Aorta (tissue), 5 donors: ENCODE measurements at regions of chr3 and their contacts with region 1.

Region 1: DNA sequence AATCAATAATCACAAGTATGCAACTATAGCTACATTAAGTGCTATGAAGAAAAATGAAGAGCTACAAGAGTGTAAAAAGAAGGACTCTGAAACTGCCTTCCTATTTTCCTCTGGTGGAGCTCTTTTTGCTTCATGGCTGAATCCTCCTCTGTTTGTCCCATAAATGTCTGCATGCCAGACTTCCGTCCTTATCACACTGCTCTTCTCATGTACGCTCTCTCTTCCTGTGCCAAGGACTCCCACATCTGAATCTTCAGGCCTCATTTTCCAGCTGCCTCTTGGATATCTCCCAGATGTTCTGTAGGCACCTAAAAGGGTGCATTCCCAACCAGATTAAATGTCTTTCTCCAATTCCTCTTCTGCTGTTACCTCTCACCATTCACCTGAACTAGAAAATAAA is 123.7 kb downstream of the MECOM start:
- DNase-seq: no peak
- ATAC-seq: no peak
- H3K4me3 ChIP-seq: no peak overlapping the region
- H3K27ac ChIP-seq: peak overlapping the region in 1 of 2 donors; percentile 57
- H3K4me1 ChIP-seq: peaks cover 4 to 30% of the 10 kb centered on the region in 2 donors
- H3K27me3 ChIP-seq: no peaks in the 10 kb centered on the region

Region 2: DNA sequence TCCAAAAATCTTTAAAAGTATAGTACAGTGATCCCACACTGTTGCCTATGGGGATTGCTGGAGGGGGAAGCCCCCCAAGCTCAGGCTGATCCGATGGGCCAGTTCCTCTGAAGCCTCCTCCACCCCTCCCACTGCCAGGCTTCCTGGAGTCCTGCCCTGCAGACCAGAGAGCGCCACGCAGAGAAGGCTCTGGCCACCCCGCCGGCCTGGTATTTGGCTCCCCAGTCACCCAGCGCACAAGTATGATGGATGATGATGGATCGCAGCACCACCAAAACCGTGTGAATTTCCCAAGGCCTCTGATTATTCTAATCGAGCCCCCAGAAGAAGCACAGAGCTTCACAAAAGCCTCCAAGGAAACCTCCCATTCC is 135.4 kb before region 1 on chr3:
- intact Hi-C with region 1: loop called in 1 of 2 experiments (anchors 10 kb)
- DNase-seq: peak in 1 of 2 donors; percentile 56
- ATAC-seq: peak; percentile 60
- H3K4me3 ChIP-seq: no peak overlapping the region
- H3K27ac ChIP-seq: no peak overlapping the region
- H3K4me1 ChIP-seq: peaks cover 2 to 5% of the 10 kb centered on the region in 2 donors
- H3K27me3 ChIP-seq: no peaks in the 10 kb centered on the region